ENCODE measurements at regions of chr15 and their contacts with region 1.

Region 1: GRCh38 chr15:59751552-59752413 is 62.7 kb upstream of the BNIP2 start:
- DNase-seq: peak in 2 of 5 donors; percentile 55 to 64
- H3K4me3 ChIP-seq: no peak overlapping the region
- H3K4me3 Mint-ChIP-seq: no peak overlapping the region
- H3K27ac ChIP-seq: no peak overlapping the region
- H3K27ac Mint-ChIP-seq: peak overlapping the region in 4 of 8 donors; percentile 7 to 76 (median 44)
- H3K4me1 ChIP-seq: peaks cover 5% of the 10 kb centered on the region
- H3K4me1 Mint-ChIP-seq: peaks cover 4 to 13% (median 13%) of the 10 kb centered on the region in 3 donors
- H3K27me3 ChIP-seq: no peaks in the 10 kb centered on the region
- H3K27me3 Mint-ChIP-seq: peaks cover 6 to 18% of the 10 kb centered on the region in 2 donors

Region 2: GRCh38 chr15:59725172-59725486 is 26.7 kb before region 1 on chr15:
- CTCF ChIA-PET with region 1: interaction called, 10 read pairs
- POLR2A ChIA-PET with region 1: no interaction called
- DNase-seq: no peak
- H3K4me3 ChIP-seq: no peak overlapping the region
- H3K4me3 Mint-ChIP-seq: no peak overlapping the region
- H3K27ac ChIP-seq: no peak overlapping the region
- H3K27ac Mint-ChIP-seq: no peak overlapping the region
- H3K4me1 ChIP-seq: no peaks in the 10 kb centered on the region
- H3K4me1 Mint-ChIP-seq: peaks cover 0 to 3% (median 0%) of the 10 kb centered on the region in 3 donors
- H3K27me3 ChIP-seq: no peaks in the 10 kb centered on the region
- H3K27me3 Mint-ChIP-seq: peaks cover 2 to 25% of the 10 kb centered on the region in 2 donors

Region 3: GRCh38 chr15:59741274-59741906 is 10.4 kb before region 1 on chr15:
- CTCF ChIA-PET with region 1: interaction called, 20 read pairs
- POLR2A ChIA-PET with region 1: no interaction called
- DNase-seq: no peak
- H3K4me3 ChIP-seq: no peak overlapping the region
- H3K4me3 Mint-ChIP-seq: no peak overlapping the region
- H3K27ac ChIP-seq: no peak overlapping the region
- H3K27ac Mint-ChIP-seq: no peak overlapping the region
- H3K4me1 ChIP-seq: no peaks in the 10 kb centered on the region
- H3K4me1 Mint-ChIP-seq: no peaks in the 10 kb centered on the region
- H3K27me3 ChIP-seq: no peaks in the 10 kb centered on the region
- H3K27me3 Mint-ChIP-seq: peaks cover 22 to 46% of the 10 kb centered on the region in 2 donors

Region 4: DNA sequence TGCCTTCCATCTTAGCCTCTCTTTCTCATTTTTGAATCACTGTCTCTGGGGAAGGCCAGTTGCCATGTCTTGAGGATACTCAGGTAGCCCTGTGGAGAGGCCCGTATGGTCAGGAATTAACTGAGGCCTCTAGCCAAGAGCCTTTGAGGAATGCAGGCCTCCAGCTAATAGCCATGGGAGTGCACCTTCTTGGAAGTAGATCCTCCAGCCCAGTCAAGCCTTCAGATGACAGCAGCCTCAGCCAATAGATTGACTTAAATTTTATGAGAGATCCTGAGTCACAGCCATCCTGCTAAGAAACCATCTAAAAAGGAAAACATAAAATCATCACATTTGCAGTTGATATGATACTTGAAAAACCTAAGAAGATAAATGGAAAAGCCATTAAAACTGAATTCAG is 49.9 kb after region 1 on chr15:
- CTCF ChIA-PET with region 1: interaction called, 16 read pairs
- POLR2A ChIA-PET with region 1: interaction called, 3 read pairs
- DNase-seq: no peak
- H3K4me3 ChIP-seq: no peak overlapping the region
- H3K4me3 Mint-ChIP-seq: peak overlapping the region in 1 of 7 donors; percentile 42
- H3K27ac ChIP-seq: no peak overlapping the region
- H3K27ac Mint-ChIP-seq: peak overlapping the region in 7 of 8 donors; percentile 38 to 84 (median 62)
- H3K4me1 ChIP-seq: peaks cover 43% of the 10 kb centered on the region
- H3K4me1 Mint-ChIP-seq: peaks cover 55 to 79% (median 79%) of the 10 kb centered on the region in 3 donors
- H3K27me3 ChIP-seq: no peaks in the 10 kb centered on the region
- H3K27me3 Mint-ChIP-seq: peaks cover 0 to 4% of the 10 kb centered on the region in 2 donors

Region 5: DNA sequence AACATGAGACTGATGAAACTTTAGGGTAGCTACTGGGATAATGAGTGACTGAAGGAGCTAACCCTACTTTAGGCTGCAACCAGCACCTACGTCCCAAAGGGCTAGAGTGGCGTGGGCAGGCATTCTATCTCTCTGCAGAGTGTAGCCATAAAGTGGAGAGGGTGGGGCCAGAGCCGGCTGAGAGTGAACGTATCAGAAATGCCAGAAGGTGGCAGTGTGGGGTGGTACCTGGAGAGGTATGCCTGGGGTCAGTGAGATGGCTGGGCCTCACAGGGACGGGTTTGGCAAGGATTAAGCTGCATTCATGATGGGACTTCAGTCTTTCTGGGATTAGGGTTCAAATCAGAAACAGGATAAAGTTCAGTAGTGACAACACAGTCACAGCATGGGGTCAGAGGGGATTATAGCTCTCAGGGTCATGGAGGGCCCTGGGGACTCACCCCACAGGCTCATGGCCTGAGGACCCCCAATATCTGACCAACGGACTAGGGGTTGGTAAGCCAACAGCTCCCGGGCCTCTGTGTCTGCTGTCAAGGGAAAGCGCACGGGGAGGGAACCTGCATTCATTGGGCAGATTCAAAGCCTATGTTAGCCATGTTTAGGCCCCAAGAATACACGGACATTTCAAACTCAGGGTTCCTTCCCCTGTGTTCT is 165.8 kb after region 1 on chr15:
- CTCF ChIA-PET with region 1: interaction called, 25 read pairs
- POLR2A ChIA-PET with region 1: no interaction called
- DNase-seq: peak; percentile 25 to 66 (median 46)
- H3K4me3 ChIP-seq: no peak overlapping the region
- H3K4me3 Mint-ChIP-seq: no peak overlapping the region
- H3K27ac ChIP-seq: no peak overlapping the region
- H3K27ac Mint-ChIP-seq: no peak overlapping the region
- H3K4me1 ChIP-seq: peaks cover 11% of the 10 kb centered on the region
- H3K4me1 Mint-ChIP-seq: peaks cover 15 to 18% (median 17%) of the 10 kb centered on the region in 3 donors
- H3K27me3 ChIP-seq: no peaks in the 10 kb centered on the region
- H3K27me3 Mint-ChIP-seq: peaks cover 14 to 21% of the 10 kb centered on the region in 2 donors

Region 6: DNA sequence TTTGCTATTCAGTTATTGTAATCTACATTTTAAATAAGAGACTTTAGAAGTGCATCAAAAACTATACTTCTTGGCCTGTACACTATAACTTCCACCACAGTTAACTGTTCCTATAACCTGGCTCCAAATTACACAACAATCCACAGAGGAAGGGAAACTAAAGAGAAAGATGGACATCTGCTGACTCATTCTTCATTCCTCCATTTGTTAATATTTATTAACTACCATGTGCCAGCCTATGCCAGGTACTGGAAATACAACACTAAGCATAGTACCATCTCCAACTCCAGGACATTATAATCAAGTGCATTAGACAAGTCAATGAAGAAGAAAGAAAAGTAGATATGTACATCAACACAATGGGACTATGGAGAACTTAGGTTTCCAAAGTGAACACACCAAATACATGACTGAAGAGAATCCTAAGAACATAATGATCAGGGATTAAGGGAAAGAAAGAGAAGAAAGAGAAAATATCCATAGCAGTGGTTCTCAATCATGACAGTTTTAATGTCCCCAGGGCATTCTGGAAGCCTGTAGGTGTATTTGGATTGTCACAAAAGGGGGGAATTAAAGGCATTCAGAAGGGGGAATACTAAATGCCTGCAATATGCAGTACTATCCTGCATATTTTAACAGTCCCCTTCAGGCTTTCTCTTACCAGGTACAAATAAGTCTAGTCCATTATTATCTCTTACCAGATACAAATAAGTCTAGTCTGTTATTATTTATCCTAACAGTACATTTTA is 718.3 kb after region 1 on chr15:
- CTCF ChIA-PET with region 1: no interaction called
- POLR2A ChIA-PET with region 1: no interaction called
- DNase-seq: no peak
- H3K4me3 ChIP-seq: no peak overlapping the region
- H3K4me3 Mint-ChIP-seq: no peak overlapping the region
- H3K27ac ChIP-seq: no peak overlapping the region
- H3K27ac Mint-ChIP-seq: peak overlapping the region in 2 of 8 donors; percentile 3 to 26
- H3K4me1 ChIP-seq: no peaks in the 10 kb centered on the region
- H3K4me1 Mint-ChIP-seq: peaks cover 17 to 40% (median 40%) of the 10 kb centered on the region in 3 donors
- H3K27me3 ChIP-seq: no peaks in the 10 kb centered on the region
- H3K27me3 Mint-ChIP-seq: no peaks in the 10 kb centered on the region